ENCODE measurements at regions of chr12 and their contacts with region 1.

Region 1: GRCh38 chr12:125330645-125331341 is 265.6 kb downstream of the AACS start:
- DNase-seq: peak; percentile 53
- H3K4me3 Mint-ChIP-seq: no peak overlapping the region
- H3K27ac Mint-ChIP-seq: no peak overlapping the region
- H3K4me1 Mint-ChIP-seq: no peaks in the 10 kb centered on the region
- H3K27me3 Mint-ChIP-seq: peaks cover 5% of the 10 kb centered on the region

Region 2: GRCh38 chr12:125259178-125259867 is 71.5 kb before region 1 on chr12:
- CTCF ChIA-PET with region 1: no interaction called
- POLR2A ChIA-PET with region 1: no interaction called
- DNase-seq: no peak
- H3K4me3 Mint-ChIP-seq: no peak overlapping the region
- H3K27ac Mint-ChIP-seq: no peak overlapping the region
- H3K4me1 Mint-ChIP-seq: no peaks in the 10 kb centered on the region
- H3K27me3 Mint-ChIP-seq: peaks cover 3% of the 10 kb centered on the region

Region 3: DNA sequence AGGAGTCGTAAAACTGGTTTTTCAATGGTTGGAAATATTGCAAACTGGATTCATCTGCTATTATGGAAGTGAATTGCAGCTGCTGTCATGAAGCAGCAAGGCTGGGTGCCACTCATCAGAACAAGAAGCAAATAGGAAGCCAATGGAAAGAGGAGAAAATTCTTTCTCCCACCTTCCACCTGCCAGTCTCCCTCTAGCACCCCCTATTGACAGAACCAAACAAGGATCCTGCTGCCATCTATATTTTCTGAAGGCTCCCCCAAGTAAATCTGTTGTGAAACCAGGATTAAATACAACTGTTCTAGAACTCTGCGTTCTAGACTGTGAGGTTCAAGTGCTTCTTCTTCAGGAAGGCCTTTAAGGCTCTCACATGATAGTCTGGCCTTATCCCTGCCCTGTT is 21.0 kb after region 1 on chr12:
- CTCF ChIA-PET with region 1: no interaction called
- POLR2A ChIA-PET with region 1: no interaction called
- DNase-seq: no peak
- H3K4me3 Mint-ChIP-seq: no peak overlapping the region
- H3K27ac Mint-ChIP-seq: no peak overlapping the region
- H3K4me1 Mint-ChIP-seq: no peaks in the 10 kb centered on the region
- H3K27me3 Mint-ChIP-seq: peaks cover 2% of the 10 kb centered on the region

Region 4: GRCh38 chr12:125402874-125403789 is 72.3 kb after region 1 on chr12:
- CTCF ChIA-PET with region 1: interaction called, 21 read pairs
- POLR2A ChIA-PET with region 1: no interaction called
- DNase-seq: no peak
- H3K4me3 Mint-ChIP-seq: no peak overlapping the region
- H3K27ac Mint-ChIP-seq: no peak overlapping the region
- H3K4me1 Mint-ChIP-seq: peaks cover 13% of the 10 kb centered on the region
- H3K27me3 Mint-ChIP-seq: peaks cover 5% of the 10 kb centered on the region